ENCODE measurements at regions of chr3 and their contacts with region 1.

Region 1: DNA sequence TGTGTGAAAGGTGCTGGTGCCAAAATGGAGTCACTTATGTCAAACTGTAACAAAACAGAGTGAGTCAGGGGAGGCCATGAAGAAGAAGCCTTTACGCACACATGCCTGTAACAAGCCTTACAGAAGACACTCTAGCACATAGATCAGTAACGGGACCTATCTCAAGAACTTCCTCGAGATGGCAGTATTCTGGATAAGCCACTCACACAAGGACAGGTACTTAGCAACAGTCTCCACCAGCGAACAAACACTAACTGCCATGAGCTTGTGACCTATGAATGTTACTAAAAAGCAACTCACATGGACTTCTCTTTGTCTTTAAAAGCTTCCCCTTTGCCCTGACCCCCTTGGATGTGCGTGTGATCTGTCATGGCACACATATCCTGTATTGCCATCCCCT is 235.1 kb downstream of the CD47 start:
- DNase-seq: peak in 1 of 2 experiments; percentile 18
- H3K4me3 ChIP-seq: no peak overlapping the region
- H3K4me3 Mint-ChIP-seq: no peak overlapping the region
- H3K27ac Mint-ChIP-seq: no peak overlapping the region
- H3K4me1 ChIP-seq: no peaks in the 10 kb centered on the region
- H3K4me1 Mint-ChIP-seq: peaks cover 5% of the 10 kb centered on the region
- H3K27me3 ChIP-seq: no peaks in the 10 kb centered on the region
- H3K27me3 Mint-ChIP-seq: peaks cover 5% of the 10 kb centered on the region
- CTCF ChIP-seq: peak; percentile 20 to 26

Region 2: GRCh38 chr3:107927361-107928083 is 71.8 kb after region 1 on chr3:
- CTCF ChIA-PET with region 1: no interaction called
- POLR2A ChIA-PET with region 1: no interaction called
- intact Hi-C with region 1: loop called (anchors 5 kb)
- DNase-seq: peak; percentile 37 to 64
- H3K4me3 ChIP-seq: peak overlapping the region; percentile 36
- H3K4me3 Mint-ChIP-seq: peak overlapping the region; percentile 74
- H3K27ac Mint-ChIP-seq: no peak overlapping the region
- H3K4me1 ChIP-seq: no peaks in the 10 kb centered on the region
- H3K4me1 Mint-ChIP-seq: peaks cover 5% of the 10 kb centered on the region
- H3K27me3 ChIP-seq: peaks cover 3% of the 10 kb centered on the region; the same call in 1 of the 2 replicates
- H3K27me3 Mint-ChIP-seq: peaks cover 10% of the 10 kb centered on the region
- CTCF ChIP-seq: peak; percentile 78 to 92

Region 3: GRCh38 chr3:108153451-108153981 is 297.8 kb after region 1 on chr3:
- CTCF ChIA-PET with region 1: no interaction called
- POLR2A ChIA-PET with region 1: no interaction called
- intact Hi-C with region 1: no loop called
- DNase-seq: peak; percentile 50 to 51
- H3K4me3 ChIP-seq: no peak overlapping the region
- H3K4me3 Mint-ChIP-seq: no peak overlapping the region
- H3K27ac Mint-ChIP-seq: no peak overlapping the region
- H3K4me1 ChIP-seq: no peaks in the 10 kb centered on the region
- H3K4me1 Mint-ChIP-seq: peaks cover 6% of the 10 kb centered on the region
- H3K27me3 ChIP-seq: no peaks in the 10 kb centered on the region
- H3K27me3 Mint-ChIP-seq: no peaks in the 10 kb centered on the region
- CTCF ChIP-seq: peak; percentile 42 to 46